ENCODE measurements at regions of chr1 and their contacts with region 1.

Region 1: GRCh38 chr1:47437447-47438164 is at the start of gene FOXD2:
- DNase-seq: peak; percentile 79
- ATAC-seq: peak; percentile 89
- H3K4me3 ChIP-seq: peak within 1 kb of the TSS; percentile 86 to 95
- H3K27ac ChIP-seq: peak within 1 kb of the TSS; percentile 96
- H3K4me1 ChIP-seq: peaks cover 3 to 10% of the 10 kb centered on the region in 2 experiments; a peak in 3 of 4 replicates
- H3K27me3 ChIP-seq: no peaks in the 10 kb centered on the region
- CTCF ChIP-seq: peak; percentile 78 to 81 (median 81)
- POLR2A ChIP-seq: peak; percentile 55
- RAD21 ChIP-seq: peak; percentile 38; the same call in 1 of the 2 replicates
- total RNA-seq, gene FOXD2: 1.9 TPM

Region 2: DNA sequence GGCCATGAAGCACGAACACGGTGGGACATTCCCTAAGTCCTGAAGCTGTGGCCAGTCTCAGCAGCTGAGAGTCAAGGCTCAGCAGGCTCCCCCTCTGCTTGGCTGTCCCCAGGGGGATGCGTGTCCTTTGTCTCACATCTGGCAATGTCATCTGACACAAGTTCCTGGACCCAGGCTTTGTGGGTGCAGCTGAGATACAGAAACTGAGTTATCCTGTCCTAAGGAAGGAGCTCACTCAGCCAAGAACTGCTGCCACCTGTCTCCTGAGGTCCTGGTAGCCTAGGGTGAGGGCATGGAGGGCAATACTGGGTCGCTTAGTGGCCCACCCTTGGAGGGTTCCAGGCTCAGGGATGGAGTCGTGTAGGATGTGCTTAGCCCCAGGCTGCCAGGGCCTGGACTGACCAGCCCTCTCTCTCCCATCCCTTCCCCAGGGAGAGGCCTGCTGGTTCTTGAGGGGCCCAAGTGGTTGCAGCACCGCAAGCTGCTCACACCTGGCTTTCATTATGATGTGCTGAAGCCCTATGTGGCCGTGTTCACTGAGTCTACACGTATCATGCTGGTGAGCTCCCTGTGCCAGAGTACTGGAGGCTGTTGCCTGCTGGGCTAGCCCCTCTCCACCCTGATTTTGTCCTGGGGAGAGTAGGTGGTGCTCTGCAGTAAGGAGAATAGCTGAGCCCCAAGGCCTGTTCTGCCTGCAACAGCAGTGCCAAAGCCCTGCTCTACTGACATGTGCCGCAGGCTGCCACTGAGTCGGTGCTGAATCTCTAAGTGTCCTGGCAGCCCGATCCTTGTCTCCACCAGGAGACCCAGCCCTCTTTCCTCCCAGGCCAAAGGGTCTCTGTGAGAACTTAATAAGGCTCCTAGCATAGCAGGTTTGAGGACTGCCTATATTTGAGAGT is 625.3 kb before region 1 on chr1:
- CTCF ChIA-PET with region 1: no interaction called
- POLR2A ChIA-PET with region 1: no interaction called
- RAD21 ChIA-PET with region 1: no interaction called
- intact Hi-C with region 1: no loop called
- DNase-seq: no peak
- ATAC-seq: no peak
- H3K4me3 ChIP-seq: no peak overlapping the region
- H3K27ac ChIP-seq: no peak overlapping the region
- H3K4me1 ChIP-seq: no peaks in the 10 kb centered on the region
- H3K27me3 ChIP-seq: peaks cover 5% of the 10 kb centered on the region; the same call in 1 of the 2 replicates
- CTCF ChIP-seq: no peak
- POLR2A ChIP-seq: no peak
- RAD21 ChIP-seq: no peak

Region 3: GRCh38 chr1:47137925-47138615 is 299.5 kb before region 1 on chr1:
- CTCF ChIA-PET with region 1: no interaction called
- POLR2A ChIA-PET with region 1: no interaction called
- RAD21 ChIA-PET with region 1: no interaction called
- intact Hi-C with region 1: no loop called
- DNase-seq: no peak
- ATAC-seq: no peak
- H3K4me3 ChIP-seq: no peak overlapping the region
- H3K27ac ChIP-seq: no peak overlapping the region
- H3K4me1 ChIP-seq: no peaks in the 10 kb centered on the region
- H3K27me3 ChIP-seq: no peaks in the 10 kb centered on the region
- CTCF ChIP-seq: no peak
- POLR2A ChIP-seq: no peak
- RAD21 ChIP-seq: no peak

Region 4: GRCh38 chr1:47211796-47212269 is 225.8 kb before region 1 on chr1:
- CTCF ChIA-PET with region 1: no interaction called
- POLR2A ChIA-PET with region 1: no interaction called
- RAD21 ChIA-PET with region 1: no interaction called
- intact Hi-C with region 1: no loop called
- DNase-seq: no peak
- ATAC-seq: no peak
- H3K4me3 ChIP-seq: no peak overlapping the region
- H3K27ac ChIP-seq: no peak overlapping the region
- H3K4me1 ChIP-seq: no peaks in the 10 kb centered on the region
- H3K27me3 ChIP-seq: no peaks in the 10 kb centered on the region
- CTCF ChIP-seq: no peak
- POLR2A ChIP-seq: no peak
- RAD21 ChIP-seq: no peak

Region 5: GRCh38 chr1:47388891-47389238 is 48.7 kb before region 1 on chr1:
- CTCF ChIA-PET with region 1: interaction called, 26 read pairs
- POLR2A ChIA-PET with region 1: no interaction called
- RAD21 ChIA-PET with region 1: no interaction called
- intact Hi-C with region 1: no loop called
- DNase-seq: peak; percentile 35
- ATAC-seq: peak; percentile 91
- H3K4me3 ChIP-seq: no peak overlapping the region
- H3K27ac ChIP-seq: no peak overlapping the region
- H3K4me1 ChIP-seq: no peaks in the 10 kb centered on the region
- H3K27me3 ChIP-seq: no peaks in the 10 kb centered on the region
- CTCF ChIP-seq: peak; percentile 73 to 80 (median 79)
- POLR2A ChIP-seq: no peak
- RAD21 ChIP-seq: peak; percentile 87

Region 6: DNA sequence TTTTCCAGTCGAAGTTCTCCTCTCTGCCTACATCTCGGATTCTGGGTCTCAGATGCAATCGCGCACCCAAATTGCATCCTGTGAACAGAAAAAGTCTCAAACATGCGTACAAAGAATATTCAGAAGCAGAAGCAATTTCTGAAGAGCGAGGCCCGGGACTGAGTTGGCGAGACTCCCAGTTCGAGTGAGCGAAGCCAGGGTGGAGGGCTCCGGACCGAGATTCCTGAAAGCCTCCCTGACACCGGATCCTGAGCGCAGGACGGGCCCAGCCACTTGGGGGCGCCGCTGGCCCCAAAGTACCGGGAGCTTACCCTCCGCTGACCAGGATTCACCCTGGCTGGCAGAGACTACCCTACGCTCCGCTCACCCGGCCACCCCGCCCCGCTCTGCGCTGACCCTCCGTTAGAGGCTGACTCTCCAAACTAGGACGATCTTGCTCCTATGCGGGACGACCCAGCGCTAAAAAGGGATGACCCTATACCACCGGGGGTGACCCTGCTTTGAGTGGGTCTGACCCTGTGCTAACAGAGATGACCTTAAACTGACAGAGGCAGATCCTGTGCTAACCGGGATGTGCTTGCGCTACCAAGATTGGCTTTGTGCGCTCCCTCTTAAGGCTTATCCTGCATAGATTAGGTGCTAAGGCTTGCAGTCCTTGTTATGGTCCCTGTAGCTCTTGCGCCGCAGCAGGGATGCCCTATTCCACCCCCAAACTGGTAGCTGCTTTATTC is 12.4 kb after region 1 on chr1:
- CTCF ChIA-PET with region 1: interaction called, 43 read pairs
- POLR2A ChIA-PET with region 1: interaction called, 4 read pairs
- RAD21 ChIA-PET with region 1: no interaction called
- intact Hi-C with region 1: no loop called
- DNase-seq: no peak
- ATAC-seq: peak; percentile 93
- H3K4me3 ChIP-seq: no peak overlapping the region
- H3K27ac ChIP-seq: no peak overlapping the region
- H3K4me1 ChIP-seq: no peaks in the 10 kb centered on the region
- H3K27me3 ChIP-seq: peaks cover 14% of the 10 kb centered on the region; the same call in 1 of the 2 replicates
- CTCF ChIP-seq: peak; percentile 62 to 86 (median 63)
- POLR2A ChIP-seq: no peak
- RAD21 ChIP-seq: peak; percentile 68

Region 7: GRCh38 chr1:47624531-47624930 is 186.9 kb after region 1 on chr1:
- CTCF ChIA-PET with region 1: interaction called, 6 read pairs
- POLR2A ChIA-PET with region 1: no interaction called
- RAD21 ChIA-PET with region 1: no interaction called
- intact Hi-C with region 1: loop called (anchors 5 kb)
- DNase-seq: peak; percentile 32
- ATAC-seq: peak; percentile 94
- H3K4me3 ChIP-seq: no peak overlapping the region
- H3K27ac ChIP-seq: no peak overlapping the region
- H3K4me1 ChIP-seq: no peaks in the 10 kb centered on the region
- H3K27me3 ChIP-seq: no peaks in the 10 kb centered on the region
- CTCF ChIP-seq: peak; percentile 58 to 98 (median 66)
- POLR2A ChIP-seq: no peak
- RAD21 ChIP-seq: peak; percentile 81

Region 8: DNA sequence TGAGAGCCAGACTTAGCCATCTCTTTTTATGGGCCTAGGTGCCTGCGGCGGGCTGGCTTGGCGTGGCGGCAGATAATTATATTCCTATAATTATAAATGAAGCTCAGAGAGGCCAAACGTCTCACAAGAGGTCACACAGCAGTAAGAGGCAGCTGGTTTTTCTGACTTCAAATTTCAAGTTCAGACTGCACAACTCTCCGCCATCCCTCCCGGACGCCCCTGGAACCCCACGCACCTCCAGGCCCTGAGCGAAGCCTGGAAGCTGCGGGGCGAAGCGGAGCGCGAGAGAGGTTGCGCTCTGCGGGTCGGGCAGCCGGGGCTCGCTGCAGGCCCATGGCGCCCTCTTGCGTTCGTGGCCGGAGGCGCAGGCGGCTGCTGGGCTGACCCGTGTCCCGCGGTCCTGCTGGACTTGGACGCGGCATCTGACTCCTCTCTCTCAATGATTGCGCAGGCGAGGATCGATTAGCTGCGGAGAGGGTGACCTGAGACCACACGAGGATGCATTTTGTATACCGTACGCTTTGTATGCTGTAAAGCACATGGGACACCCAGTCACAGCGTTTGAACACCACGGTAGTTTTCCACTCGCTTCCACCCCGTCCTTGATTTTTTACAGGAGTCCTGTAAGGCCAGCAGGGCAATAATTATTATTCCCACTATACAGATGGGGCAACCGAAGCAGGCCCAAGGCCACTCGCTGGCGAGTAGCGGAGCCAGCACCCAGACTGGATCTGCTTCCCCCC is 272.9 kb after region 1 on chr1:
- CTCF ChIA-PET with region 1: interaction called, 75 read pairs
- POLR2A ChIA-PET with region 1: interaction called, 5 read pairs
- RAD21 ChIA-PET with region 1: interaction called in 1 of 2 experiments, 4 read pairs
- intact Hi-C with region 1: loop called (anchors 1 kb)
- DNase-seq: peak; percentile 28
- ATAC-seq: peak; percentile 88
- H3K4me3 ChIP-seq: peak overlapping the region; percentile 16 to 57; a peak in 3 of 4 replicates
- H3K27ac ChIP-seq: no peak overlapping the region
- H3K4me1 ChIP-seq: peaks cover 0 to 18% of the 10 kb centered on the region in 2 experiments; a peak in 1 of 4 replicates
- H3K27me3 ChIP-seq: peaks cover 28% of the 10 kb centered on the region
- CTCF ChIP-seq: peak; percentile 91 to 98 (median 92)
- POLR2A ChIP-seq: no peak
- RAD21 ChIP-seq: peak; percentile 96